Mammary epithelial cell (primary cell): ENCODE measurements at regions of chr10 and their contacts with region 1.

Region 1: DNA sequence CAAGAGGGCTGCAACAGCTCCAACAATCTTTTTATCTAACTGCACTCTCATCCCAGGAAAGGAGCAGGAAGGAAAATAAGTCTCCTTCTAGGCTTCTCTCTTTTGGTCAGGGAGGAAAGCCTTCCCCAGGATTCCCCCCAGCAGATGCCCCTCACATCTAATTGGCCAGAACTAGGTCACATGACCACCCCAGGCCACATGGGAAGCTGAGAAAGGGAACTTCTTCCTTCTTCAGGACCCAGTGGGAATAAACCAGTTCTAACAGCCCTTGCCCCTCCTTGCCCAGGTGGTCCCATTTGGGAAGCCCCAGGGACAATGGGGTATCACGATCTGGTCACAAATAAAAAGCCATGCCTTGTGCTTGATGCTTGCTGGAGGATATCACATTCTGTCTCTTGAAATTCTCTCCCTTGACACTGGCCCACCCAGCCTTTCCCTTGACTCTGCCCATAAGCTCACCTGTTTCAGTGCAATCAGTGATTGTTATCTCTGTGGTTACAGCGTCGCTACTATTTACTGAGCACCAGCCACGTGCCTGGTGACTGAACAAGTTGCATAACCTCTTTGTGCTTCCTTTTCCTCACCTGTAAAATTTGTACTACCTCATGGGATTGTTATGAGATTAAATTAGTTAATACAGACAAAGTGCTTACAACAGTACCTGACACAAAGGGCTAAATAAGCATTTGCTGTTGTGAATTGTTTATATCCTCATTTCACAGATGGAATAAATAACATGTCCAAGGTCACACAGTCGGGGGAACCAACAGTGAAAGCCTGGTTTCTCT is 9.0 kb upstream of the TACR2 start:
- DNase-seq: peak; percentile 75
- H3K4me3 ChIP-seq: no peak overlapping the region
- H3K27ac ChIP-seq: no peak overlapping the region
- H3K4me1 ChIP-seq: peaks cover 14% of the 10 kb centered on the region
- H3K27me3 ChIP-seq: no peaks in the 10 kb centered on the region
- CTCF ChIP-seq: no peak

Region 2: GRCh38 chr10:69237528-69238159 is 188.1 kb before region 1 on chr10:
- CTCF ChIA-PET with region 1: no interaction called
- dilution Hi-C with region 1: no loop called
- in situ Hi-C with region 1: no loop called
- intact Hi-C with region 1: no loop called
- DNase-seq: peak; percentile 61
- H3K4me3 ChIP-seq: no peak overlapping the region
- H3K27ac ChIP-seq: no peak overlapping the region
- H3K4me1 ChIP-seq: peaks cover 13% of the 10 kb centered on the region
- H3K27me3 ChIP-seq: no peaks in the 10 kb centered on the region
- CTCF ChIP-seq: peak; percentile 90 to 92

Region 3: DNA sequence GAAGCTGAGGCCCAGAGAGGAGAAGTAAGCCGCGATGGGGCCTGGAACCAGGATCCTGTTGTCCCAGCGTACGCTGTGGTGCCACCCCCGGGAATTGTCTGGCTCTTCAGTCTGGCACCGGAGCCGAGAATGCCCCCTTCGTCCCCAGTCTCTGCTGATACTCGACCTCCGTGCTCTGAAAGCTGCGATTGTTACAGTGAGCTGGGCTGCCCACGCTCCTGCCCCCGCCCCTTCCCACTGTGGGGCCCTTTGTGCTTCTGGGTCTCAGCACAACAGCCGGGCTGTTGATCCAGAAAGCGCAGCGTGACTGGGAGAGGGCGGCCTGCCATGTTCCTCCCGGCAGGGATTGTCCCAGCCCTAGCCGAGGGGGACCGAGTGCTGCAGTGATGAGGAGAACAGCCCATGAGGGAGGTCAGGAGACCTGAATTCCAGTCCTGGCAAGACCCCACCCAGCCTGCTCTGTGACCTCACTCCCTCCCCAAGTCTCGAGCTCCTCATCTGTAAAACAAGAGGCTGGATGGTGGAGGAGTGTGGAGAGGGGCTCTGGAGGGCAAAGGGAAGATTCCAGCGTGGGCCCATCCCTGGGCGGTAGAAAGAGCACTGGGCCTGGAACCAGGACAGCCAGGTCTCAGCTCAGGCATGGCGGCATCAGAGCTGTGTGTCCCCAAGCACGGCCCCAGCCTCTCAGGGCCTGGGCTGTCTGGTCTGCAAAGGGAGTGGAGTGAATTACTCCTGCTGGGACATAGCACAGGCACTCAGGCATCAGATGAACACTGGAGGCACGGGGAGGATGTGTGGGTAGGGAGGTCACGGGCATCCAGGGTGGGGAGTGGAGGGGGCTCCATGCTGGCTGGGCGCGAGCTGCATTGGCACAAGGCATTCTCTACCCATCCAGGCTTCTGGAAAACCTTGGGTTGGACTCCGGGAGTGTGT is 69.2 kb after region 1 on chr10:
- CTCF ChIA-PET with region 1: no interaction called
- dilution Hi-C with region 1: loop called (anchors 5 kb)
- in situ Hi-C with region 1: loop called in 1 of 2 experiments (anchors 5 kb)
- intact Hi-C with region 1: no loop called
- DNase-seq: no peak
- H3K4me3 ChIP-seq: no peak overlapping the region
- H3K27ac ChIP-seq: no peak overlapping the region
- H3K4me1 ChIP-seq: no peaks in the 10 kb centered on the region
- H3K27me3 ChIP-seq: no peaks in the 10 kb centered on the region
- CTCF ChIP-seq: no peak

Region 4: GRCh38 chr10:69506834-69507721 is 81.4 kb after region 1 on chr10:
- CTCF ChIA-PET with region 1: no interaction called
- dilution Hi-C with region 1: no loop called
- in situ Hi-C with region 1: loop called (anchors 5 kb)
- intact Hi-C with region 1: loop called (anchors 1 kb)
- DNase-seq: no peak
- H3K4me3 ChIP-seq: no peak overlapping the region
- H3K27ac ChIP-seq: no peak overlapping the region
- H3K4me1 ChIP-seq: no peaks in the 10 kb centered on the region
- H3K27me3 ChIP-seq: peaks cover 6% of the 10 kb centered on the region
- CTCF ChIP-seq: no peak

Region 5: DNA sequence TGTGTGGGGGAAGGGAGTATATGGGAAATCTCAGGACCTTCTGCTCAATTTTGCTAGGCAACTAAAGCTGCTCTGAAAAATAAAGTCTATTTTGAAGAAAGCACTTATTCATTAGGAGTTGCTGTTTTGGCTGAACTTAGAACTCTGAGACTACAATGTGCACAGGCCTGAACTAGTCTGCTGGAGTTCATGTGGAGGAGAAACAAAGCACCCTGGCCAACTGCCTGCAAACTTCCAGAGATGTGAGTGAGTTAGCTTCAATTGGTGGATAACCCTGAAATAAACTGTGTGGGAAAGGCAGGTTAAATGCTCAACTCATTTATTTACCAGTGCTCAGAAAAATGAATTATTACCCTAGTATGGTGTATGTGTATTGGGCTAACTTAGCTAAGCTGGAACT is 187.1 kb after region 1 on chr10:
- CTCF ChIA-PET with region 1: no interaction called
- dilution Hi-C with region 1: no loop called
- in situ Hi-C with region 1: no loop called
- intact Hi-C with region 1: no loop called
- DNase-seq: peak; percentile 43
- H3K4me3 ChIP-seq: no peak overlapping the region
- H3K27ac ChIP-seq: no peak overlapping the region
- H3K4me1 ChIP-seq: peaks cover 5% of the 10 kb centered on the region
- H3K27me3 ChIP-seq: no peaks in the 10 kb centered on the region
- CTCF ChIP-seq: no peak

Region 6: GRCh38 chr10:69657430-69657829 is 231.7 kb after region 1 on chr10:
- CTCF ChIA-PET with region 1: no interaction called
- dilution Hi-C with region 1: loop called (anchors 5 kb)
- in situ Hi-C with region 1: no loop called
- intact Hi-C with region 1: no loop called
- DNase-seq: peak; percentile 4
- H3K4me3 ChIP-seq: no peak overlapping the region
- H3K27ac ChIP-seq: no peak overlapping the region
- H3K4me1 ChIP-seq: no peaks in the 10 kb centered on the region
- H3K27me3 ChIP-seq: peaks cover 5% of the 10 kb centered on the region
- CTCF ChIP-seq: no peak